OCI-LY7 (cell line): ENCODE measurements at regions of chr11 and their contacts with region 1.

Region 1: DNA sequence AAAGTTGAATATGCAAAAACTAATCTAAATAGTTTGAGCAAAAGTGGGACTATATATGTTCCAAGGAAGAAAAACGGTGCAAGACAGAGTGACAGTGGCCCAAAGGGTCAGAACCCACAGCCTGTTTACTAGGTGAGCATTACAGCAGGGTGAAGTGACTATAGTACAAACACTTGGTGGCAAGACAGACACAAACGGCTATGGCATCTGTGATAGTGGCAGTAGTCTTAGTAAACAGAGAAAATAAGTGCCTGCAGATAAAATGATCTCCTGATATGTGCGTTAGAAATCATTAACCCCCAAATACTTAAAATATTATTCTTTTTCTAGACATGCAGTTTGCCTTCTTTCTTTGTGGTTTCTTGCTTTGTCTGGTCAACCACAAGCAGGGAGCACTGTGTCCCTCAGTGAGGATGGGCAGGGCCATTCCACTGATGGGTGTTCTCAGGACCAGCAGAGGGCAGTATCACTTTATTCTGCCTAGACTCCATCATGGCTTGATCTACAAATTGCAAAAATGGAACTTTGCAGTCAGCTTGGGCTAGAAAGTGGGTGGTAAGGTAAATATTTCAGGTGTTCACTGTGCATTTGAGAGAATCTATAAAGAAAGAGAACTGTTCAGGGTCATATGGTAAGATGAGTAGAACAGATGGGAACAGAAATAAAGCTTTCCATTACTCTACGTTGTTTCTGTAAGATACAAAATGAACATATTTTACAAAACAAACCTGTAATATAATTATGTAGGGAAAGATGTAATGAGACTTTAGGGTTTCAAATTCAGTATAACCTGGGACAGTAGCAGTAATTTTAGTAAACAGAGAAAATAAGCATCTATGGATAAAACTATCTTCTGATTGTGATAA is 198.2 kb downstream of the SWAP70 start:
- DNase-seq: peak; percentile 80
- H3K4me3 ChIP-seq: no peak overlapping the region
- H3K27ac ChIP-seq: peak overlapping the region; percentile 21
- H3K4me1 ChIP-seq: peaks cover 32% of the 10 kb centered on the region
- CTCF ChIP-seq: peak; percentile 98

Region 2: GRCh38 chr11:9796854-9797253 is 65.2 kb before region 1 on chr11:
- CTCF ChIA-PET with region 1: no interaction called
- POLR2A ChIA-PET with region 1: no interaction called
- intact Hi-C with region 1: no loop called
- DNase-seq: no peak
- H3K4me3 ChIP-seq: no peak overlapping the region
- H3K27ac ChIP-seq: no peak overlapping the region
- H3K4me1 ChIP-seq: peaks cover 5% of the 10 kb centered on the region
- CTCF ChIP-seq: no peak

Region 3: GRCh38 chr11:9815486-9816136 is 46.5 kb before region 1 on chr11:
- CTCF ChIA-PET with region 1: no interaction called
- POLR2A ChIA-PET with region 1: no interaction called
- intact Hi-C with region 1: no loop called
- DNase-seq: no peak
- H3K4me3 ChIP-seq: no peak overlapping the region
- H3K27ac ChIP-seq: no peak overlapping the region
- H3K4me1 ChIP-seq: no peaks in the 10 kb centered on the region
- CTCF ChIP-seq: no peak

Region 4: DNA sequence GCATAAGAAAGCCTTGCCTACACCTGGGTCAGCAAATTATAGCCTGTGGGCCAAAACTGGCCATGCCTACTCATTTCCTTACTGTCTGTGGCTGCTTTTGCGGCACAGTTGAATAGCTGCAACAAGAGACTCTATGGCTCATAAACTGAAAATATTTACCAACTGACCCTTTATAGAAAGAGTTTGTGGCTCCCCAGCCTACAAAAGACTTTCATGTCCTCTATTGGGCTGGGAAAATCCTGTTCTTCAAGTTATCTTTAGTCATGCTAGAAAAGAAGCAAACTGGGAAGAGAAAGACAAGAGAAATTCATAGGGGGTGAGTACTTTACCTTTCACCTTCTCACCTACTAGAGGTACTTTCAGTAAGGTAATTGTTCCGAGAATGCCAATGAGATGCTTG is 23.1 kb before region 1 on chr11:
- CTCF ChIA-PET with region 1: no interaction called
- POLR2A ChIA-PET with region 1: interaction called, 10 read pairs
- intact Hi-C with region 1: no loop called
- DNase-seq: no peak
- H3K4me3 ChIP-seq: no peak overlapping the region
- H3K27ac ChIP-seq: no peak overlapping the region
- H3K4me1 ChIP-seq: peaks cover 6% of the 10 kb centered on the region
- CTCF ChIP-seq: no peak

Region 5: GRCh38 chr11:9893474-9893873 is 31.4 kb after region 1 on chr11:
- CTCF ChIA-PET with region 1: no interaction called
- POLR2A ChIA-PET with region 1: no interaction called
- intact Hi-C with region 1: no loop called
- DNase-seq: peak; percentile 10
- H3K4me3 ChIP-seq: no peak overlapping the region
- H3K27ac ChIP-seq: no peak overlapping the region
- H3K4me1 ChIP-seq: no peaks in the 10 kb centered on the region
- CTCF ChIP-seq: no peak

Region 6: GRCh38 chr11:9914064-9914463 is 52.0 kb after region 1 on chr11:
- CTCF ChIA-PET with region 1: no interaction called
- POLR2A ChIA-PET with region 1: no interaction called
- intact Hi-C with region 1: no loop called
- DNase-seq: no peak
- H3K4me3 ChIP-seq: no peak overlapping the region
- H3K27ac ChIP-seq: no peak overlapping the region
- H3K4me1 ChIP-seq: no peaks in the 10 kb centered on the region
- CTCF ChIP-seq: no peak

Region 7: GRCh38 chr11:9972989-9973388 is 110.9 kb after region 1 on chr11:
- CTCF ChIA-PET with region 1: no interaction called
- POLR2A ChIA-PET with region 1: no interaction called
- intact Hi-C with region 1: loop called (anchors 2 kb)
- DNase-seq: peak; percentile 73
- H3K4me3 ChIP-seq: no peak overlapping the region
- H3K27ac ChIP-seq: no peak overlapping the region
- H3K4me1 ChIP-seq: no peaks in the 10 kb centered on the region
- CTCF ChIP-seq: peak; percentile 92

Region 8: DNA sequence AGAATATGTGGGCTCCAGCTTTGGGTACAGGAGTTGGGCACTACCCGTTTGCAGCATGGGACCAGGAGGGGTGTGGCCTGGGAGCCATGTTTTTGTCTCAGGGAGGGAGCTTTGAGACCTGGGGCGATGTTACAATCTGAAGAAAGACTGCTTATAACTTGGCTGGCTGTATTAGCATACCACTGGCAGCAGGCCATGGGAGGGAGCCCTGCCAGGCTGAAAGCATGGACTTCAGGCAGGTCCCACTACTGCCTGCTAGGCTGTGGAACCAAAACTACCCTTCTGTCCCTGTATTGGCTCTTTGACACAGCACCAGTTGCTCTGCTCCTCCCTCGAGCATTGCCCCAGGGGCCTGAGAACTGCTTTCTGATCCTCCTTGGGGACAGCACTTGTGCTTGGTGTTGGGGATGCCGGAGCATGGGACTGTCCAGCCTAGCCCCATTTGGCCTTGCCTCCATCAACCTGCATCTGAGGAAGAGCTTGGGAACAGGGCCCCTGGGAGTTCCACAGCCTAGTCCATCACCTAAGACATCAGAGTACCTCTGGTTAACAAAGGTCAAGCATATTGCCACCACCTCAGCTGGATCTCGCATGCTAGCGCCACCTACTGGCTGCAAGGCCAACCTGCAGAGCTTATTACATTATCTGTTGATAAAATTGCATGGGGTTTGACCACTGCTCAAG is 214.5 kb after region 1 on chr11:
- CTCF ChIA-PET with region 1: no interaction called
- POLR2A ChIA-PET with region 1: no interaction called
- intact Hi-C with region 1: loop called (anchors 5 kb)
- DNase-seq: peak; percentile 65
- H3K4me3 ChIP-seq: no peak overlapping the region
- H3K27ac ChIP-seq: no peak overlapping the region
- H3K4me1 ChIP-seq: no peaks in the 10 kb centered on the region
- CTCF ChIP-seq: peak; percentile 87

Region 9: GRCh38 chr11:10314199-10315072 is 452.3 kb after region 1 on chr11:
- CTCF ChIA-PET with region 1: no interaction called
- POLR2A ChIA-PET with region 1: interaction called, 3 read pairs
- intact Hi-C with region 1: loop called (anchors 2 kb)
- DNase-seq: peak; percentile 92
- H3K4me3 ChIP-seq: peak overlapping the region; percentile 50
- H3K27ac ChIP-seq: peak overlapping the region; percentile 93
- H3K4me1 ChIP-seq: peaks cover 96% of the 10 kb centered on the region
- CTCF ChIP-seq: no peak